Activated CD4-positive, alpha-beta memory T cell treated with anti-CD3 and anti-CD28 coated beads, Interleukin-2, amount 10 ng/mL, durations not matched to agents 7 days and 5 days (primary cell): ENCODE measurements at regions of chrX and their contacts with region 1.

Region 1: GRCh38 chrX:23952984-23953907 is 45.4 kb downstream of the CXorf58 start:
- DNase-seq: peak; percentile 56
- H3K4me3 Mint-ChIP-seq: peak overlapping the region; percentile 80
- H3K27ac Mint-ChIP-seq: peak overlapping the region; percentile 93
- H3K4me1 Mint-ChIP-seq: peaks cover 29% of the 10 kb centered on the region
- H3K27me3 Mint-ChIP-seq: no peaks in the 10 kb centered on the region

Region 2: DNA sequence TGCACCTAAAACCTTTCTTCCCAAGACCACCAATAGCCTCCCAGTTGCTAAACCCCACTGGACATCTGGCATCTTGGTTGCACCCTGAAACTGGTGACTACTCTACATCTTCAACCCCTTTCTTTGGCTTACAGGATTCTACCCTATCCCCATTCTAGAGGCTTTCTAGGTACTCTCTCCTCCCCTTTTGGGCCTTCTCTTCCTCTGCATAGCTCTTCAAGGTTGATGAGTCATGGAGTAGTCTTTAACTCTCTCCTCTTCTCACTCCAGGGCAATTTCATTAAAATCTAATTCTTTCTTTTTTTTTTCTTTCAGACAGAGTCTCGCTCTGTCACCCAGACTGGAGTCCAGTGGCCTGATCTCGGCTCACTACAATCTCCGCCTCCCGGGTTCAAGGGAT is 62.3 kb before region 1 on chrX:
- CTCF ChIA-PET with region 1: no interaction called
- POLR2A ChIA-PET with region 1: no interaction called
- DNase-seq: no peak
- H3K4me3 Mint-ChIP-seq: no peak overlapping the region
- H3K27ac Mint-ChIP-seq: no peak overlapping the region
- H3K4me1 Mint-ChIP-seq: peaks cover 3% of the 10 kb centered on the region
- H3K27me3 Mint-ChIP-seq: no peaks in the 10 kb centered on the region

Region 3: GRCh38 chrX:23907498-23908218 is 45.6 kb before region 1 on chrX and contains the starts of genes APOO and CXorf58:
- CTCF ChIA-PET with region 1: interaction called, 10 read pairs
- POLR2A ChIA-PET with region 1: interaction called, 6 read pairs
- DNase-seq: peak; percentile 93
- H3K4me3 Mint-ChIP-seq: peak within 1 kb of the TSS; percentile 77
- H3K27ac Mint-ChIP-seq: peak within 1 kb of the TSS; percentile 89
- H3K4me1 Mint-ChIP-seq: peaks cover 23% of the 10 kb centered on the region
- H3K27me3 Mint-ChIP-seq: no peaks in the 10 kb centered on the region
- total RNA-seq, gene APOO: 25.1 to 26.3 TPM
- total RNA-seq, gene CXorf58: not detected

Region 4: GRCh38 chrX:24024819-24025740 is 71.8 kb after region 1 on chrX:
- CTCF ChIA-PET with region 1: no interaction called
- POLR2A ChIA-PET with region 1: interaction called, 10 read pairs
- DNase-seq: peak; percentile 86
- H3K4me3 Mint-ChIP-seq: peak overlapping the region; percentile 88
- H3K27ac Mint-ChIP-seq: peak overlapping the region; percentile 87
- H3K4me1 Mint-ChIP-seq: peaks cover 27% of the 10 kb centered on the region
- H3K27me3 Mint-ChIP-seq: no peaks in the 10 kb centered on the region